ENCODE measurements at regions of chr9 and their contacts with region 1.

Region 1: DNA sequence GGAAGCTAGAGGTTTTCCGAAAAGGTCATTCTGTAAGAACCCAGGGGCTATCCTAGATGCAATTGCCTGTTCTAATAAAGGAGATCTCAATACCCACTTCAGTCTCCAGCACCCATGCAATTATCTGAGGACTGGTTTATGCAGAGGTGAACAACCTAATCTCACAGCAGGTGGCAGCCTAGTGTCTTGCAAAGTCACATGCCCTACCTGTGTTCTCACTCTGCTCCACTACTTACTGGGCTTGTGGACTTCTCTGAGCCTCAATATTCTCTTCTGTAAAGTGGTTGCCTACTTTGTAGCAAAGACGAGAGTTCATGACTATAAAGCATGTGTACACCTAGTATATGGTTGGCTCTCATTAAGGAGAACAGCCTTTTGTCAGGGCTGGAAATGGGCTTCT is 21.0 kb upstream of the ALDH1B1 start:
- DNase-seq: no peak
- H3K4me3 ChIP-seq: no peak overlapping the region
- H3K27ac ChIP-seq: no peak overlapping the region
- H3K4me1 ChIP-seq: peaks cover 0 to 14% (median 7%) of the 10 kb centered on the region in 4 donors
- H3K27me3 ChIP-seq: no peaks in the 10 kb centered on the region
- CTCF ChIP-seq: peak; percentile 46 to 62 (median 58)
- EP300 ChIP-seq: no peak
- POLR2A ChIP-seq: no peak

Region 2: DNA sequence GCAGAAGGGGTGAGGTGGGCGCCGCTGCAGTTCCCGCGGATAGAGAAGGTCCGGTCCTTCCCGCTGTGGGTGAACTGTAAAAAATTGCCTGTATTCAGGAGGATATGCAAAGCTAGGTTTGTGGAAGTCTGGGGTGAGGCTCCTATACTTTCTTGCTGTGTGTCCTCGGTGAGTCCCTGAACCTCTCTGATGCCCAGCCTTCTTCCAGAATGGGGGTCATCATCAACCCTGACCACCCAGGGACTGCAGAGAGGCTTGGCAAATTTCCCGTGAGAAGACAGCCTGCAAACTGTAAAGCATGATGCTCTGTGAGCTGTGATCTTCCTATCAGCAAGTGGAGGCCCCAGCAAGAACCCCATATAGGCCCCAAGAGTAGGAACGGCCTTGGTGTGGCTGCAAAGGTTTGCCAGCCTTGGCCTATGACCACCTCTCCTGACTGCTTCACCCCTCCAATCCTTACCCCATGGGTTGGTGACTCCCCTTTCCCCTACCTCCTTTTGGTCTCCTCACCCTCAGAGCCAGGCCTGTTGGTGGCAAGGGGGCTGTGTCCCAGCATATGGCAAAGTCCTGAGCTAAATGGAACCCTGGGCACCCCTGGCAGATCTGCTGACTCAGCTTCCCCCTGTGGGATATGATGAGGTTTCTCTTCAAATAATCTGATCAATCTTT is 21.8 kb after region 1 on chr9:
- intact Hi-C with region 1: loop called (anchors 2 kb)
- DNase-seq: no peak
- H3K4me3 ChIP-seq: peak overlapping the region; percentile 66 to 88 (median 78)
- H3K27ac ChIP-seq: peak overlapping the region; percentile 89 to 96 (median 90)
- H3K4me1 ChIP-seq: peaks cover 9 to 91% (median 89%) of the 10 kb centered on the region in 4 donors
- H3K27me3 ChIP-seq: no peaks in the 10 kb centered on the region
- CTCF ChIP-seq: no peak
- EP300 ChIP-seq: no peak
- POLR2A ChIP-seq: no peak

Region 3: DNA sequence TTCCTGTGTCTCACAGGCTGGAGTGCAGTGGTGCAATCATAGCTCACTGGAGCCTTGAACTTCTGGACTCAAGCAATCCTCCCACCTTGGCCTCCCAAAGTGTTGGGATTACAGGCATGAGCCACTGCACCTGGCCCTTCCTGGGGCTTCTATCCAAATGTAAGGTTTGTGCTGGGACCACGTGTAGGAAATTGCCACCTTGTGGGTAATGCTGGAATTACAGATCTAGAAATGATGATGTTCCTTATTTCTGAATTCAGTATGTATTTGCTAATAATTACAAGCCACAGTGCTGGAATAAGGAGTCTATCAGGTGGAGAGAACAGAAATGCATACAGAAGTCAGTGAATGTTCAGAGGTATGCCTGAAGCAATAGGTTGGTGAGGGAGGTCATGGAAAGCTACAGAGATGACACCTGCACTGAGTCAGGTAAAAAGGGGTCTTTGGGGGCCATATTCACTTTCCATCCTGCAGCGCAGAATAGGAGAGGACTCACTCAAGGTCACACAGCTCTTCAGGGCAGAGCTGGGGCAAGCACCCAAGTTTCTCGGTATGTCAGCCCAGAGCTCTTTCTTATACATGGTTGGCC is 61.5 kb after region 1 on chr9:
- intact Hi-C with region 1: loop called (anchors 5 kb)
- DNase-seq: no peak
- H3K4me3 ChIP-seq: no peak overlapping the region
- H3K27ac ChIP-seq: no peak overlapping the region
- H3K4me1 ChIP-seq: no peaks in the 10 kb centered on the region
- H3K27me3 ChIP-seq: no peaks in the 10 kb centered on the region
- CTCF ChIP-seq: peak; percentile 52 to 67 (median 60)
- EP300 ChIP-seq: no peak
- POLR2A ChIP-seq: no peak